ENCODE measurements at regions of chr4 and their contacts with region 1.

Region 1: DNA sequence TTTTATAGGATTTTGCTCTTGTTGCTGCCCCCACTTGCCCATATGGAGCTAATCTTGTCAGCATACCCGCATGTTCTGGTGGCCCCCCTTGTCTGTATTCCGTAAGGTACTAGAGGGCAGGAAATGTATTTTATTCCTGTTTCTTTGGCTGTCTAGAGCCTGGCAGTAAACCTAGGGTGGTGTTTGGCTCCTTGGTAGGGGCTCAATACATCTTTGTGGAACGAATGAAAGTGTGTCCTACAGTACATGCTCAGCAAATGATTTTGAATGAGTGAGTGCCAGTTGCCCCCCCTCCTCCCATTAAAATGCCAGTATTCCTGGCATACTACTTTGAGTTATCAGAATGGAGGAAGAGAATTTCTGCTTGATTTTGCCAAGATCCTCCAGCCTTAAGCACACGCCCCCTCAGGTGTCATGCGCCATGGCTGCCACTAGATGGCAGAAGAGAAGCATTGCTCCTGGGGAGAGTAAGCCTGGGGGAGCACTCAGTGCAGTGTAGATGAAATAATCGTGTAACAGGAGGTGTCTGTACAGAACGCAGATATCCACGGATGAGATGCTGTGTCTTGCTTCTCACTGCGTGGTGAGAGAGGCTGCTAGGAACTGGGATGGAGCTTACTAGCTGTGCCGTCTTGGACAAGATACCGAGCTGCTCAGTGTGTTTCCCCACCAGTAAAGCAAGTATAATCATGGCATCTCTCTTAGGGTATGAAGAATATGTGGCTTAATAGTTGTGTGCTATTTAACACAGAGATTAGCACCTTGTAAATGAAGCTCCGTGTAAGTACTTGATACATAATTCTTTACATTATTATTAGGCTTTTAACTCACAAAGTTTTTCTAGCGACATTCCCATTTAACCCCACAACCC is 17.2 kb upstream of the RNF212 start:
- DNase-seq: peak; percentile 72
- ATAC-seq: peak; percentile 91

Region 2: DNA sequence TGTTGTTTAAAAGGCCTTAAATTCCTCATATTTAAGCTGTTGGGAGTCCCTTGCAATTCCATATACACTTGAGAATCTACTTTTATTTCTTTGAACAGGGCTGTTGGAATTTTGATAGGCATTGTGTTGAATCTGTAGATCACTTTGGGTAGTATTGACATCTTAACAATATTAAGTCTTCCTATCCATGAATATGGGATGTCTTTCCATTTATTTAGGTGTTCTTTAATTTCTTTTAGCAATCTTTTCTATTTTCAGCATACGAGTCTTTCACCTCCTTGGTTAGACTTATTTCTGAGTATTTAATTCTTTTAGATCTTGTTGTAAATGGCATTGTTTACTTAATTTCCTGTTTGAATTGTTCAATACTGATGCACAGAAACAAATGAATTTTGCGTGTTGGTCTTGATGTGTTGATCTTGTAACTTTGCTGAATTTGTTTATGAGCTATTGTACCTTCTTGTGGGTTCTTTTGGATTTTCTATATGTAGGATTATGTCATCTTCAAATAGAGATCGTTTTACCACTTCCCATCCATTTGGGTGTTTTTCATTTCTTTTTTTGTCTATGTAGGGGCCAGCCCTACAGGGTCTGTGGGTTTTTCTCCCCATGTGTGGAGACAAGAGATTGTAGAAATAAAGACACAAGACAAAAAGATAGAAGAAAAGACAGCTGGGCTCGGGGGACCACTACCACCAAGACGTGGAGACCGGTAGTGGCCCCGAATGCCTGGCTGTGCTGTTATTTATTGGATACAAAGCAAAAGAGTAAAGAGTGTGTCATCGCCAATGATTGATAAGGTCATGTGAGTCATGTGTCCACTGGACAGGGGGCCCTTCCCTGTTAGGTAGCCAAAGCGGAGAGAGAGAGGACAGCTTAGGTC is 136.6 kb after region 1 on chr4:
- intact Hi-C with region 1: loop called (anchors 2 kb)
- DNase-seq: no peak
- ATAC-seq: no peak

Region 3: GRCh38 chr4:1309261-1310010 is 178.9 kb after region 1 on chr4:
- intact Hi-C with region 1: no loop called
- DNase-seq: peak; percentile 91
- ATAC-seq: peak; percentile 97

Region 4: GRCh38 chr4:1346781-1347409 is 216.3 kb after region 1 on chr4 and contains the start of gene UVSSA:
- intact Hi-C with region 1: loop called (anchors 2 kb)
- DNase-seq: peak; percentile 100
- ATAC-seq: peak; percentile 98
- total RNA-seq, gene UVSSA: 6.5 TPM

Measured in Right ventricle myocardium inferior (tissue), 1 donor.